ENCODE measurements at regions of chr9 and their contacts with region 1.

Region 1: DNA sequence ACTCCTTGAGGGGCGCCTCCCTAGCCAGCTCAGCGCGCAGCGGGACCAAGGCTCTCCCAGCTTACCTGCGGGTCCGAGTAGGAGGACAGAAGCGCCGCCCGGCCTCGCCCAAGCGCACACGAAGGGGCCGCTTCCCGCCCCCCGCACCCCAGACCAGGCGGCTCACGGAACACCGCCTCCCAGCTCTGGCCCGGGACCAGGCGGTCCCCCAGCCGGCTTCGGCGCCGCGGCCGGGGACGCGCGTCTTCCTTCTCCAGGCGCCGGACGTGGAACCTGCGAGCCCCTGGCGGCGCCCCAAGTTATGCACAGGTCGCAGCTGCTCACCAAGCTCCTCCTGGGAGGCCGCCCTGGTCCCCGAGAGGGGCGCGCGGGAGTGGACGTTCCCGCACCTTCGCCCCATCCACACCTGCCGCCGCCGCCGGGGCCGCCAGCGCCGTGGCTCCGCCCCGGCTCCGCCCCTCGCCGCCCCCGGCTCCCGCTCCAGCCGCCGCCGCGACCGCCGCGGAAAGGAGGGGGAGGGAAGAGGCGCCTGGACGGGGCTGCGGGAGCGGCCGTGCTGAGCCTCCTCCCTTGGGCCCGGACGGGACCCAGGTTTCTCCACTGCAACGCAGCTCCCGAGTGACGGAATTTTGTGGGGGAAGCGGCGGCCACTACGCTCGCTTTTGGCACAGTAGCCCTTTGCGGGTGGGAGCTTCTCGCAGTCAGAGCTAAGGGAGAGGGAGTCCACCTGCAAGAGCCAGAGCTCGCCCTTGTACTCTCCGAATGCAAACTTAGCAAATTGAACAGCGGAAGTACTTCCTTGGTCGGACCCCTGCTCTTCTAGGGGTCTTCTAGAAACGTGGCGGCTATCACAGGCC is 77.5 kb upstream of the IFNE start:
- DNase-seq: no peak
- H3K4me3 ChIP-seq: peak overlapping the region; percentile 65 to 80 (median 71)
- H3K27ac ChIP-seq: peak overlapping the region; percentile 85
- H3K4me1 ChIP-seq: peaks cover 19% of the 10 kb centered on the region
- H3K27me3 ChIP-seq: no peaks in the 10 kb centered on the region
- CTCF ChIP-seq: peak in 1 of 3 experiments; percentile 16

Region 2: DNA sequence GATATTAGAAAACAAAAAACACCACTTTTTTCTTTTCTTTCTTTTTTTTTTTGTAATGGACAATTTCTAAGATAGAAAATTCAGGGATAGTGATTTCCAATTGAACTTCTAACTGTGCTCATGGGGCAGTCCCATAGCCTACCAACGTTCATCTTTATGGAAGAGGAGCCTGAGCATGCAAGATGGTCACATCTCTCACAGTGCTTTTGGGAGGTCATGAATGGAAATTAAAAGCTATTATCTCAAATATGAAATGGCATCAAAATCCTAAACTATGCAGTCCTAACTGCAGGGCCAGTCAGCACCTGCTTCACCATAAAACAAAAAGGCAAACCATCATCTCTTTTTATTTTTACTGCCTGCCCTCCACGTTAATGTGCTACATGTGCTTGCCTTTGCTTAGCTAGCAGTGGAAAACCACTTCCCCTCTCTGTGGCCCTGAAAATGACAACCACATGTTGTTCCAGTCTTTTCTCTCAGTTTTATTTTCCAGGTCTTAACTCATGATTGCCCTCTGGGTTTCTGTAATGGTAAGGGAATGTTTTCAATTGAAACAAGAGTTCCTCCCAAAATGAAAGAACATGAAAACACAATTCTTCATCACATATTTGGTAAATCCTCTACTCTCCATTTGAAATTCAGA is 498.6 kb before region 1 on chr9:
- dilution Hi-C with region 1: no loop called
- DNase-seq: no peak
- H3K4me3 ChIP-seq: no peak overlapping the region
- H3K27ac ChIP-seq: no peak overlapping the region
- H3K4me1 ChIP-seq: no peaks in the 10 kb centered on the region
- H3K27me3 ChIP-seq: no peaks in the 10 kb centered on the region
- CTCF ChIP-seq: no peak

Region 3: GRCh38 chr9:21465859-21466518 is 93.7 kb before region 1 on chr9:
- dilution Hi-C with region 1: no loop called
- DNase-seq: no peak
- H3K4me3 ChIP-seq: no peak overlapping the region
- H3K27ac ChIP-seq: no peak overlapping the region
- H3K4me1 ChIP-seq: no peaks in the 10 kb centered on the region
- H3K27me3 ChIP-seq: no peaks in the 10 kb centered on the region
- CTCF ChIP-seq: peak in 2 of 3 experiments; percentile 35 to 46

Region 4: DNA sequence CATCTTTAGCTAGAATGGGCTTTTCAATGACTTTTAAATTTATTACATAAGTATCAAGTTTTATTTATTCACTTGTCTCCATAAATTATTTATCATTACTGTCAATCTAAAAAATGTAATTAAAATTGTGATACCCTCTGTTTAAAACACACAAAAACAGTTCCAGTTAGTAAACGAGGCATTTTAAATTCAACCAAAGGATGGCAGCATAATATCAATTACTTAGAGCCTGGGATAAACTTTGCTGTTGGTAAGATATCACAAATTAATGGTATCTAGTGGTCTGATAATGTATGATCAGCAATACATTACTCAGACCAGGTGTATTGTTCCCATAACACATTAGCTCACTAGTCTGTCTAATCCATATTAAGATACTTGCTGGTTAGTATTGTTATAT is 67.9 kb before region 1 on chr9:
- dilution Hi-C with region 1: no loop called
- DNase-seq: no peak
- H3K4me3 ChIP-seq: no peak overlapping the region
- H3K27ac ChIP-seq: no peak overlapping the region
- H3K4me1 ChIP-seq: no peaks in the 10 kb centered on the region
- H3K27me3 ChIP-seq: no peaks in the 10 kb centered on the region
- CTCF ChIP-seq: no peak

Region 5: GRCh38 chr9:21677834-21678233 is 118.2 kb after region 1 on chr9:
- dilution Hi-C with region 1: loop called (anchors 10 kb)
- DNase-seq: peak; percentile 98
- H3K4me3 ChIP-seq: peak overlapping the region in 2 of 3 experiments; percentile 54 to 63
- H3K27ac ChIP-seq: peak overlapping the region; percentile 97
- H3K4me1 ChIP-seq: peaks cover 74% of the 10 kb centered on the region
- H3K27me3 ChIP-seq: no peaks in the 10 kb centered on the region
- CTCF ChIP-seq: no peak

Region 6: GRCh38 chr9:21789541-21790037 is 229.9 kb after region 1 on chr9:
- dilution Hi-C with region 1: loop called (anchors 25 kb)
- DNase-seq: peak; percentile 65
- H3K4me3 ChIP-seq: peak overlapping the region in 2 of 3 experiments; percentile 38 to 45
- H3K27ac ChIP-seq: peak overlapping the region; percentile 51
- H3K4me1 ChIP-seq: peaks cover 17% of the 10 kb centered on the region
- H3K27me3 ChIP-seq: no peaks in the 10 kb centered on the region
- CTCF ChIP-seq: peak; percentile 53 to 78 (median 73)